ENCODE measurements at regions of chr20 and their contacts with region 1.

Region 1: GRCh38 chr20:53805895-53806384 is 212.3 kb upstream of the ZNF217 start:
- DNase-seq: peak; percentile 81
- ATAC-seq: peak; percentile 93
- H3K4me3 ChIP-seq: no peak overlapping the region
- H3K27ac ChIP-seq: peak overlapping the region; percentile 100
- H3K4me1 ChIP-seq: peaks cover 48% of the 10 kb centered on the region
- H3K27me3 ChIP-seq: no peaks in the 10 kb centered on the region
- CTCF ChIP-seq: no peak

Region 2: GRCh38 chr20:53692413-53693067 is 113.4 kb before region 1 on chr20:
- CTCF ChIA-PET with region 1: no interaction called
- POLR2A ChIA-PET with region 1: no interaction called
- in situ Hi-C with region 1: no loop called
- intact Hi-C with region 1: no loop called
- DNase-seq: no peak
- ATAC-seq: peak; percentile 82
- H3K4me3 ChIP-seq: no peak overlapping the region
- H3K27ac ChIP-seq: peak overlapping the region; percentile 85
- H3K4me1 ChIP-seq: peaks cover 28% of the 10 kb centered on the region
- H3K27me3 ChIP-seq: no peaks in the 10 kb centered on the region
- CTCF ChIP-seq: no peak

Region 3: GRCh38 chr20:53708129-53708968 is 97.6 kb before region 1 on chr20:
- CTCF ChIA-PET with region 1: interaction called, 15 read pairs
- POLR2A ChIA-PET with region 1: no interaction called
- in situ Hi-C with region 1: no loop called
- intact Hi-C with region 1: no loop called
- DNase-seq: no peak
- ATAC-seq: peak; percentile 97
- H3K4me3 ChIP-seq: peak overlapping the region in 1 of 2 experiments; percentile 23; a peak in 2 of 4 replicates
- H3K27ac ChIP-seq: peak overlapping the region; percentile 99
- H3K4me1 ChIP-seq: peaks cover 54% of the 10 kb centered on the region
- H3K27me3 ChIP-seq: no peaks in the 10 kb centered on the region
- CTCF ChIP-seq: no peak

Region 4: GRCh38 chr20:53773792-53774401 is 32.0 kb before region 1 on chr20:
- CTCF ChIA-PET with region 1: interaction called, 5 read pairs
- POLR2A ChIA-PET with region 1: no interaction called
- in situ Hi-C with region 1: no loop called
- intact Hi-C with region 1: loop called (anchors 1 kb)
- DNase-seq: peak; percentile 81
- ATAC-seq: peak; percentile 86
- H3K4me3 ChIP-seq: no peak overlapping the region
- H3K27ac ChIP-seq: peak overlapping the region; percentile 100
- H3K4me1 ChIP-seq: peaks cover 46% of the 10 kb centered on the region
- H3K27me3 ChIP-seq: no peaks in the 10 kb centered on the region
- CTCF ChIP-seq: no peak